ENCODE measurements at regions of chr5 and their contacts with region 1.

Region 1: DNA sequence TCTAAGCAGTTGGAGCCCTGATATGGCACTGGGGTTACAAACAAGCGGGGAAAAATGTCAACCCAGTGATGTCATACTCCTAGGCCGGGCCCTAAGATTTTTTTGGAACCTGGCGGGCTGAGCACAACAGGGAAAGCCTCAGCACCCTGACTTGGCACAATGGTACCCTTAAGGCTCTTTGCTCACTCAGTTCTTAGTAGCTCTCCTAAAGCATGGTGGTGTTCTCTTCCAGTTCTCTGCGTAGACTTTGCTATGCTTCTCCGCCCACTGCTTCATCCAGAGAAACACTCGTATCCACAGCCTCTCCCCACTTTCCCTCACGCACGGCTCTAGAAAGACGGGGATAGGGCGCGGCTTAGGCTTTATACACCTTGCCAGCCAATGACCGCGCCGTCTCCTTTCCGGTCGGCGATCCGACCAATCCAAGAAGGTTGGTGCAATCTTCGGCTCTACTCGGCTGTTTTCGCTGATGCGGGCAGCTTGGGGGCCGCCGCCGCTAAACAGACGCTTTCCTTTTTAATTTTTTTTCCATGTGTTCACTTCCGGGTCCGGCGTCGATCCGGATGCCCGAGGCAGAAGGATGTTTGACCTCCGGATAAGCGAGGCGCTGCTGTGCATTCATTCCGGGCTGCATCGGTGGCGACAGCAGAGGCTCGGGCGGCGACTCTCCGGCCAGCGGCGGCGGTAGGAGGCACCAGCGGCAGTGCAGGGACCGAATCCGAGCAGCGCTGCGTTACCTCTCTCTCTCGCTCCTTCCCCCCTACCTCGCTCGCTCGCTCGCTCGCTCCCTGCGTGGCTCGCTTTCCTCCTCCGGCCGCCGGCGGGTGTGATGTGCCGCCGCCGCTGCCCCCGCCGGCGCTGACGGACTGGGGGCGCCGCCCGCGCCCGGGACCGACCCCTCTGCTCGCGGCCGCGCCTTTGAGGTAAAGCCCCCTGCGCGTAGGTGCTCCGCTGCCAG is at the start of gene CSNK1G3:
- DNase-seq: peak; percentile 74 to 94 (median 89)
- ATAC-seq: peak; percentile 91
- H3K4me3 ChIP-seq: peak within 1 kb of the TSS; percentile 73
- H3K4me3 Mint-ChIP-seq: peak within 1 kb of the TSS; percentile 92 to 100 (median 99)
- H3K27ac ChIP-seq: peak within 1 kb of the TSS; percentile 75
- H3K27ac Mint-ChIP-seq: peak within 1 kb of the TSS; percentile 96 to 99 (median 98)
- H3K4me1 ChIP-seq: peaks cover 15 to 24% of the 10 kb centered on the region in 2 donors
- H3K4me1 Mint-ChIP-seq: peaks cover 29 to 55% (median 45%) of the 10 kb centered on the region in 7 donors
- H3K27me3 ChIP-seq: no peaks in the 10 kb centered on the region
- H3K27me3 Mint-ChIP-seq: peaks cover 0 to 16% (median 0%) of the 10 kb centered on the region in 5 donors
- total RNA-seq, gene CSNK1G3: 33.1 to 83.8 (median 71.0) TPM

Region 2: GRCh38 chr5:121962347-121962670 is 1549.6 kb before region 1 on chr5:
- CTCF ChIA-PET with region 1: no interaction called
- POLR2A ChIA-PET with region 1: no interaction called
- intact Hi-C with region 1: loop called (anchors 1 to 5 kb)
- DNase-seq: no peak
- ATAC-seq: no peak
- H3K4me3 ChIP-seq: peak overlapping the region; percentile 85
- H3K4me3 Mint-ChIP-seq: peak overlapping the region; percentile 95 to 99 (median 98)
- H3K27ac ChIP-seq: peak overlapping the region; percentile 73
- H3K27ac Mint-ChIP-seq: peak overlapping the region; percentile 93 to 98 (median 96)
- H3K4me1 ChIP-seq: peaks cover 9 to 16% of the 10 kb centered on the region in 2 donors
- H3K4me1 Mint-ChIP-seq: peaks cover 30 to 51% (median 47%) of the 10 kb centered on the region in 7 donors
- H3K27me3 ChIP-seq: no peaks in the 10 kb centered on the region
- H3K27me3 Mint-ChIP-seq: peaks cover 0 to 21% (median 9%) of the 10 kb centered on the region in 5 donors

Region 3: DNA sequence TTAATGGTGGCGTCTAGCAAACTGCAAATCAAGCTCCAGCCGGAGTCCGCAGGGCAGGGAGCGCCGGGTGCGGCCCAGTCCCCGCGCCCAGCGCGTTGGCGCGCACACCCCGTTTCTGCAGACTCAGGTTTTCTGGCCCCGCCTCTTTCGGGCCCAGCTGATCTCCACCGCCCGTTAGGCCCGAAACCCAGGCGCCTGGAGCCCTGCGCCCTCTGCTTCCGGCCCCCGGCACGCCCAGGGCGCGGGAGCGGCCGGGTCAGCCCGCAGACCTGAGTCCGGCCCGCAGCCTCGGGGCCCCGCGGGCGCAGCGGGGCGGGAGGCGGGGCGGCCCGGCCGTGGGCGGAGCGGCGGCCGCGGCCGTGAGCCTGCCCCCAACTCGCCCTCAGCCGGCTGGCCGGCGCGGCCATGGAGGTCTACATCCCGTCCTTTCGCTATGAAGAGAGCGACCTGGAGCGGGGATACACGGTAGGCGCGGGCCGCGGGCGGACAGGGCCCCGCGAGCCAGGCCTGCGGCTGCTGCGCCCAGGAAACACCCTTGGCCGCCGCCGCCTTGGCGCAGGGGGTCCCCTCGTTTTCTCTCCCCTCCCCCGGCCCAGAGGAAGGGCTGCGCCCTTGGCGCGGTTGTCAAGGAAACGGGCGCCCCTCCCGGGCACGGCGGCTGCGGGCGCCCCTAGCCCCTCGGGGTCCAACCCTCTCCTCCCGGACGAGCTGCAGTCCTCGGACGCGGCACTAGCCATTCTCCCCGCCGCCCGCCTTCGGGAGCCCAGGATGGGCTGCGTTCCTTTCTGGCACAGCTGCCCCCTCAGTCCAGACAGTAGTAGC is 666.5 kb before region 1 on chr5 and contains the start of gene SNX24:
- CTCF ChIA-PET with region 1: no interaction called
- POLR2A ChIA-PET with region 1: no interaction called
- intact Hi-C with region 1: loop called in 1 of 2 experiments (anchors 5 kb)
- DNase-seq: peak; percentile 52 to 67 (median 63)
- ATAC-seq: peak; percentile 88
- H3K4me3 ChIP-seq: peak within 1 kb of the TSS; percentile 82
- H3K4me3 Mint-ChIP-seq: peak within 1 kb of the TSS; percentile 83 to 93 (median 89)
- H3K27ac ChIP-seq: peak within 1 kb of the TSS; percentile 65
- H3K27ac Mint-ChIP-seq: peak within 1 kb of the TSS; percentile 38 to 90 (median 78)
- H3K4me1 ChIP-seq: peaks cover 10 to 11% of the 10 kb centered on the region in 2 donors
- H3K4me1 Mint-ChIP-seq: peaks cover 19 to 40% (median 27%) of the 10 kb centered on the region in 7 donors
- H3K27me3 ChIP-seq: no peaks in the 10 kb centered on the region
- H3K27me3 Mint-ChIP-seq: peaks cover 3 to 35% (median 9%) of the 10 kb centered on the region in 5 donors
- total RNA-seq, gene SNX24: 1.3 to 3.5 (median 2.4) TPM

Region 4: GRCh38 chr5:123438902-123439301 is 73.0 kb before region 1 on chr5:
- CTCF ChIA-PET with region 1: no interaction called
- POLR2A ChIA-PET with region 1: no interaction called
- intact Hi-C with region 1: loop called in 1 of 2 experiments (anchors 1 kb)
- DNase-seq: peak in 1 of 9 donors; percentile 50
- ATAC-seq: peak; percentile 60
- H3K4me3 ChIP-seq: no peak overlapping the region
- H3K4me3 Mint-ChIP-seq: peak overlapping the region in 1 of 10 donors; percentile 50
- H3K27ac ChIP-seq: no peak overlapping the region
- H3K27ac Mint-ChIP-seq: peak overlapping the region in 2 of 9 donors; percentile 12 to 82
- H3K4me1 ChIP-seq: no peaks in the 10 kb centered on the region
- H3K4me1 Mint-ChIP-seq: peaks cover 0 to 32% (median 0%) of the 10 kb centered on the region in 7 donors
- H3K27me3 ChIP-seq: no peaks in the 10 kb centered on the region
- H3K27me3 Mint-ChIP-seq: peaks cover 0 to 2% (median 0%) of the 10 kb centered on the region in 5 donors

Region 5: GRCh38 chr5:123527190-123527589 is 15.3 kb after region 1 on chr5:
- CTCF ChIA-PET with region 1: no interaction called
- POLR2A ChIA-PET with region 1: interaction called, 6 read pairs
- intact Hi-C with region 1: loop called in 1 of 2 experiments (anchors 1 kb)
- DNase-seq: no peak
- ATAC-seq: no peak
- H3K4me3 ChIP-seq: no peak overlapping the region
- H3K4me3 Mint-ChIP-seq: peak overlapping the region in 3 of 10 donors; percentile 0 to 29 (median 23)
- H3K27ac ChIP-seq: no peak overlapping the region
- H3K27ac Mint-ChIP-seq: peak overlapping the region in 2 of 9 donors; percentile 27 to 46
- H3K4me1 ChIP-seq: no peaks in the 10 kb centered on the region
- H3K4me1 Mint-ChIP-seq: peaks cover 24 to 83% (median 66%) of the 10 kb centered on the region in 7 donors
- H3K27me3 ChIP-seq: no peaks in the 10 kb centered on the region
- H3K27me3 Mint-ChIP-seq: no peaks in the 10 kb centered on the region

Region 6: GRCh38 chr5:123582550-123583285 is 70.8 kb after region 1 on chr5:
- CTCF ChIA-PET with region 1: no interaction called
- POLR2A ChIA-PET with region 1: interaction called, 6 read pairs
- intact Hi-C with region 1: loop called in 1 of 2 experiments (anchors 10 kb)
- DNase-seq: no peak
- ATAC-seq: peak; percentile 36
- H3K4me3 ChIP-seq: no peak overlapping the region
- H3K4me3 Mint-ChIP-seq: no peak overlapping the region
- H3K27ac ChIP-seq: no peak overlapping the region
- H3K27ac Mint-ChIP-seq: no peak overlapping the region
- H3K4me1 ChIP-seq: no peaks in the 10 kb centered on the region
- H3K4me1 Mint-ChIP-seq: peaks cover 0 to 6% (median 0%) of the 10 kb centered on the region in 7 donors
- H3K27me3 ChIP-seq: no peaks in the 10 kb centered on the region
- H3K27me3 Mint-ChIP-seq: no peaks in the 10 kb centered on the region